ENCODE measurements at regions of chr22 and their contacts with region 1.

Region 1: GRCh38 chr22:42747701-42748513 is 27.2 kb upstream of the A4GALT start:
- DNase-seq: peak in 3 of 5 donors; percentile 40 to 46 (median 43)
- ATAC-seq: peak in 2 of 4 donors; percentile 4 to 5
- H3K4me3 ChIP-seq: no peak overlapping the region
- H3K27ac ChIP-seq: peak overlapping the region in 11 of 12 donors; percentile 27 to 89 (median 78)
- H3K4me1 ChIP-seq: peaks cover 9 to 76% (median 50%) of the 10 kb centered on the region in 12 donors
- H3K27me3 ChIP-seq: no peaks in the 10 kb centered on the region
- CTCF ChIP-seq: no peak
- POLR2A ChIP-seq: no peak

Region 2: GRCh38 chr22:42680648-42681047 is 67.3 kb before region 1 on chr22:
- intact Hi-C with region 1: loop called in 1 of 10 experiments (anchors 5 kb)
- DNase-seq: peak in 1 of 5 donors; percentile 79
- ATAC-seq: peak in 2 of 4 donors; percentile 27 to 66
- H3K4me3 ChIP-seq: no peak overlapping the region
- H3K27ac ChIP-seq: peak overlapping the region in 7 of 12 donors; percentile 0 to 97 (median 39)
- H3K4me1 ChIP-seq: peaks cover 35 to 92% (median 80%) of the 10 kb centered on the region in 12 donors
- H3K27me3 ChIP-seq: no peaks in the 10 kb centered on the region
- CTCF ChIP-seq: no peak
- POLR2A ChIP-seq: no peak